PC-9 (cell line): ENCODE measurements at regions of chr12 and their contacts with region 1.

Region 1: DNA sequence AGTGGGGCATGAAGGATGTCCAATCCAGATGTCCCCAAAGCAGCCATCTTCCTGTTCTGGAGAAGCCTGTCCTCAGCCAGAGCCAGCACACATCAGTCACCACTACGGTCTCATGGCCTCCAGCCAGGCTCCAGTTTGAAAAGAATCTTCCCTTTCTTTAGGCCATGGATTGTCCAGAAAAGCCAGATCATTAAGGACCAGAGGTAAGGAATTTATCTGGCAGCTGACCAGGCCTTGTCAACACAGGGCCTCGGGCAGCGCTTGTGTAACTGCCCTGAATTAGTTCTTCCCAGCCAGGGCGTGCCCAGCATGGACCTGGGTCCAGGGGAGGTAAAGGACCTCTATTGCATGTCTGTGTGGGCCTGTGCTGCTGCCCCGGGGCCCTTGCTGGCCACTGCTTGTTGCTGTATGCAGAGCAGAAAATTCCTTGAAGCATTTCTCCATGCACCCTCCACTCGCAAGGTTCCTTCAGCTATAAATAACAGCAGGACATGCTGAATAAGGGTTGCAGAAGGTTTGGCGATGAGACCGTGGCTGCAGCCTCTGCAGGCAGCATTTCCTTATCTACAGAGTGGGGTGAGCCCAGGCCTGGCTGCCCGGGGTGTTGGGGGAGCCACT is 21.7 kb upstream of the VPS37B start:
- DNase-seq: peak; percentile 88 to 93
- H3K4me3 ChIP-seq: no peak overlapping the region
- H3K27ac ChIP-seq: peak overlapping the region; percentile 90
- H3K4me1 ChIP-seq: peaks cover 61% of the 10 kb centered on the region
- H3K27me3 ChIP-seq: no peaks in the 10 kb centered on the region
- CTCF ChIP-seq: no peak

Region 2: DNA sequence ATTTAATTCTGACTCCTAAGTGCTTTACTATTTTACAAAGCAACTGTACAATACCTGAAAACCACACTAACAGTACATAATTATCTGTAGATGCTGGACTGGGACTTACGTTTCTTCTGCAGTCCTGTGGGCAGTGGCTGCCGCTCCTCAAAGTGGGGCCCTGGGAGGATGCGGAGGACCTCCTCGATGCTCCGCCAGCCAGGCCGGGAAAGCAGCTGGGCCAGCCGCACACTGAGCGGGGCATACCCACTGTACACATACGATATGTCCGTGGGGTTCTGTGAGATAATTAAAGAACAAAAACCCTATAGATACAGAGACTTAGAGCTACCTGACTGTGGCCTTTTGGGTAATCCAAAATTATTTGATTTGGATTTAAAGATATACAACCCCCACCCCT is 684.9 kb before region 1 on chr12:
- CTCF ChIA-PET with region 1: interaction called, 10 read pairs
- POLR2A ChIA-PET with region 1: no interaction called
- intact Hi-C with region 1: no loop called
- DNase-seq: no peak
- H3K4me3 ChIP-seq: no peak overlapping the region
- H3K27ac ChIP-seq: no peak overlapping the region
- H3K4me1 ChIP-seq: no peaks in the 10 kb centered on the region
- H3K27me3 ChIP-seq: no peaks in the 10 kb centered on the region
- CTCF ChIP-seq: no peak

Region 3: GRCh38 chr12:122813310-122813713 is 104.3 kb before region 1 on chr12:
- CTCF ChIA-PET with region 1: no interaction called
- POLR2A ChIA-PET with region 1: no interaction called
- intact Hi-C with region 1: no loop called
- DNase-seq: no peak
- H3K4me3 ChIP-seq: no peak overlapping the region
- H3K27ac ChIP-seq: no peak overlapping the region
- H3K4me1 ChIP-seq: 0 out of 2 replicates have a peak, but pooled peaks cover 7% of the 10 kb centered on the region
- H3K27me3 ChIP-seq: no peaks in the 10 kb centered on the region
- CTCF ChIP-seq: no peak

Region 4: GRCh38 chr12:122895705-122896636 is 21.6 kb before region 1 on chr12 and contains the start of gene VPS37B:
- CTCF ChIA-PET with region 1: no interaction called
- POLR2A ChIA-PET with region 1: interaction called, 12 read pairs
- intact Hi-C with region 1: loop called (anchors 2 kb)
- DNase-seq: peak; percentile 63 to 82
- H3K4me3 ChIP-seq: peak within 1 kb of the TSS; percentile 61
- H3K27ac ChIP-seq: peak within 1 kb of the TSS; percentile 97
- H3K4me1 ChIP-seq: peaks cover 73% of the 10 kb centered on the region
- H3K27me3 ChIP-seq: no peaks in the 10 kb centered on the region
- CTCF ChIP-seq: no peak
- total RNA-seq, gene VPS37B: 51.4 and 53.5 TPM in 2 replicates

Region 5: DNA sequence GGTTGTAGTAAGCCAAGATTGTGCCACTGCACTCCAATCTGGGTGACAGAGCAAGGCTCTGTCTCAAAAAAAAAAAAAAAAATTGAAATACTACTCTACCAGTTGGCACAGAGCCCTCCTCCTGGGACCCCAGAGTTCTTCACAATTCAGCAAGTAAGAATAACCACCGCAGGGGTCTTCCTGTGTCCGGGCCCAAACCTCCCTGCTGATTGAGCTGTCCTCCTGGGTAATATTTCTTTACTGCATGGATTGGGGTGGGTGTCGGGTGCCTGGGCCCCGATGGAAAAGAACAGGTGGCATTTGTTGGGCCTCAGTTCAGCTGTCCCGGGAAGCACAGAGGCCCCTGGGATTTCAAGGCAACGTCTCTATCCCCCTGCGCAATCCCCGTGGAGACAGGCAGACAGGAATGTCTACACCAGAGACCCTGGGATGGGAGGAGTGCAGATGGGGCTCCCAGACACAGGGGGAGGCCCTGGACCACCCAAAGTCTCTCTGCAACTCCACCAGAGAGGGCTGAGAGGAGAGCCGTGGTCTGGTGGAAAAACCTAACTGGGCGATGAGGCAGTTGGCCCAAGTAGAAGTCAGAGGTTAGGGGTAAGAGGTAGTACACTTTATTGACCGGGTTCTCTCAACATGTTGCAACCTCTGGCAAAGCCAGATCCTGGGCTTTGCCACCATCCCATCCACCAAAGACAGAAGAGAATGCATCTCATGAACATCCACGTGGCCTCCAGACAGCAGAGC is 11.0 kb after region 1 on chr12:
- CTCF ChIA-PET with region 1: interaction called, 12 read pairs
- POLR2A ChIA-PET with region 1: no interaction called
- intact Hi-C with region 1: no loop called
- DNase-seq: no peak
- H3K4me3 ChIP-seq: no peak overlapping the region
- H3K27ac ChIP-seq: no peak overlapping the region
- H3K4me1 ChIP-seq: no peaks in the 10 kb centered on the region
- H3K27me3 ChIP-seq: no peaks in the 10 kb centered on the region
- CTCF ChIP-seq: no peak

Region 6: GRCh38 chr12:122946690-122947341 is 29.2 kb after region 1 on chr12:
- CTCF ChIA-PET with region 1: interaction called, 3 read pairs
- POLR2A ChIA-PET with region 1: interaction called, 5 read pairs
- intact Hi-C with region 1: loop called (anchors 1 kb)
- DNase-seq: peak; percentile 87 to 91
- H3K4me3 ChIP-seq: no peak overlapping the region
- H3K27ac ChIP-seq: peak overlapping the region; percentile 58
- H3K4me1 ChIP-seq: peaks cover 62% of the 10 kb centered on the region
- H3K27me3 ChIP-seq: no peaks in the 10 kb centered on the region
- CTCF ChIP-seq: no peak; the same call in 1 of the 2 replicates

Region 7: GRCh38 chr12:123056053-123056741 is 138.6 kb after region 1 on chr12:
- CTCF ChIA-PET with region 1: interaction called, 12 read pairs
- POLR2A ChIA-PET with region 1: no interaction called
- intact Hi-C with region 1: no loop called
- DNase-seq: peak; percentile 60 to 80
- H3K4me3 ChIP-seq: no peak overlapping the region
- H3K27ac ChIP-seq: no peak overlapping the region
- H3K4me1 ChIP-seq: peaks cover 18% of the 10 kb centered on the region
- H3K27me3 ChIP-seq: no peaks in the 10 kb centered on the region
- CTCF ChIP-seq: no peak